ENCODE measurements at regions of chr7 and their contacts with region 1.

Region 1: GRCh38 chr7:154913638-154914312 is 89.1 kb downstream of the PAXIP1 start:
- DNase-seq: no peak
- H3K4me3 ChIP-seq: peak overlapping the region; percentile 22 to 35
- H3K27ac ChIP-seq: no peak overlapping the region
- H3K4me1 ChIP-seq: peaks cover 13% of the 10 kb centered on the region
- H3K27me3 ChIP-seq: no peaks in the 10 kb centered on the region
- CTCF ChIP-seq: peak; percentile 69 to 90 (median 81)
- POLR2A ChIP-seq: no peak

Region 2: DNA sequence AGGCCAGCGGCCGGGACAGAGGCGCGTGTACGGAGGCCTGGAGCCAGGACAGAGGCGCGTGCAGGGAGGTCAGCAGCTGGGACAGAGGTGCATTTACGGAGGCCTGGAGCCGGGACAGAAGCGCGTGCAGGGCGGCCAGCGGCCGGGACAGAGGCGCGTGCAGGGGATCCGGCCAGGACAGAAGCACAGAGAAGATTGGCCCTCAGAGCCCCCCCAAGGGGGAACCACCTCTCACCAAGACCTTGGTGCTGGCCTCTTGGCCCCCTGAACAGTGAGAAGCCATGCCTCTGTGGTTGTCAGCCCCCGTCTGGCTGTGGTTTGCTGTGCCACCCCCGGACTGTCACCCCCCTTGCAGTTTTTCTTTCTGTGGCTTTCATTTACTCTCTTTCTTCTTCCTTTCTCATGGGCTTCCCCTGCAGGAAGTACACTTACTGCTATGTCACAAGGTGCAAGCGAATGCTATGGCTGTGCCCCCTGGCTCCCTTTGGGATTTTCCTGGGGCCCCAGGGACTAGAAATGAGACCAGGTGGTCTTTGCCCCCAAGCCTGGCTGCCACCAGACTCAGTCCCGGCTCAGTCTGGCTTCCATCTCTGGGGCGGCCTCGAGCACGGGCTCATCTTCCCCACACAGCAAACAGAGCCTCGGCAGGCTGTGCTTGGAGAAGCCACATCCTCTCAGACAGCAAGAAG is 425.0 kb after region 1 on chr7:
- intact Hi-C with region 1: loop called (anchors 10 kb)
- DNase-seq: no peak
- H3K4me3 ChIP-seq: no peak overlapping the region
- H3K27ac ChIP-seq: no peak overlapping the region
- H3K4me1 ChIP-seq: no peaks in the 10 kb centered on the region
- H3K27me3 ChIP-seq: no peaks in the 10 kb centered on the region
- CTCF ChIP-seq: no peak
- POLR2A ChIP-seq: no peak

Measured in vagina (tissue), 2 donors.